ENCODE measurements at regions of chr16 and their contacts with region 1.

Region 1: DNA sequence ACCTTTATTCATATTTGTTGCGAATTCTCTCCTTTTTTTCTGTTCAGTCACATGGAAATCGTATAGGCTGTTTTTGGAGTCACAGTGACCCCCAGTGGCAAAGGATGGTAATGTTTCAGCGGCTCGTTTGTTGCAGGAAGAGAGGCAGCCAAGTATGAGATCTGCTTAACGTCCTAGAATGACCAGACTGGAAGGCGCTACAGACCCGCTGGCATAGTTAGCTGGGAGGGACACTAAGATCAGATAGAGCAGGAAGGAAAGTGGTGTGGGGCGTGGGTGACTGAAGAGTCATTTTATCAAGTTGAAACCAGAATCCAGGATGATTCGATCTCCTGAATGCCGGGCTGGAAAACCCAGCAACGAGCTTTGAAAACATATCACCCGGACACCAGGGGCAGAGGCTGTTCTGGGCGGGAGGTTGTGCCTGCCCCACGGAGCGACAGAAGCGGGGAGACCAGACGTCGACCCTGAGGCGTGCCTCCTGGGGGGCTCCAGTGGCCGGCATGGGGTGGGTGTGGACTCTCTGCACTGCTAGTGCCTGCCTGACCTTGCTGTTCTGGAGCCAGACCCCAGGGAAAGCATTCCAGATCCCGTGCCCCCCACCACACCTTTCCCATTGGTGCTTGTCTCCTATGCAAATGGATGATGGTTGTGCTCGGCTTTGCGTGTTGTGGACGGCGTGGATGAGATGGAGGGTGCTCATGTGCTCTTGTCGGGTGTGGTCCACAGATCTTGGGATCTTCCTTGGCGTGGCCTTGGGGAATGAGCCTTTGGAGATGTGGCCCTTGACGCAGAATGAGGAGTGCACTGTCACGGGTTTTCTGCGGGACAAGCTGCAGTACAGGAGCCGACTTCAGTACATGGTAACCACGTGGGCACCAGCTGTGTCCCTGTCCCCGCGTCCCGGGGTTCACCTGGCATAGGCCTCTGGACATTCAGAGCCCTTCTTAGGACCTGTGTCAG is 7.7 kb downstream of the IL34 start:
- DNase-seq: peak; percentile 89
- ATAC-seq: peak; percentile 77

Region 2: DNA sequence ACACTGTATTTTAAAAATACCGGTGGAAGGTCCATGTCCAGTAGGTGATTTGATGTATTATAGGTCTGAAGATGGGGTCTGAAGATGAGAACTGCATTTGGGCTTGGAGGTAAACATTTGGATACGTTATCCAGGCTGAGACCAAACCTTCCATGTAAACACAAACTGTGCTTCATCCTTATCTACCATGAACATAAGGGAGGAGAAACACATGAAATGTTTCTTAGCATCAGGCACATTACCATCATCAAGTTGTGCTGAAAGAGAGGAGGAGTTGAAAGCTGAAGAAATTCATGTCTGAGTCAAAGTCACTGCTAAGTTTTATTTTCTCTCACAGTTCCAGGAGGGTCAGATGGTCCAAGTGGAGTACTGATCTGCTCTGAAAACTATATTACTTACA is 119.1 kb before region 1 on chr16:
- intact Hi-C with region 1: loop called (anchors 5 kb)
- DNase-seq: no peak
- ATAC-seq: no peak

Measured in sciatic nerve (tissue), 2 donors.